PC-9 (cell line): ENCODE measurements at regions of chr6 and their contacts with region 1.

Region 1: GRCh38 chr6:21109391-21110178 is 484.0 kb upstream of the SOX4 start:
- DNase-seq: peak; percentile 20 to 86
- H3K4me3 ChIP-seq: no peak overlapping the region
- H3K27ac ChIP-seq: peak overlapping the region; percentile 32
- H3K4me1 ChIP-seq: peaks cover 48% of the 10 kb centered on the region
- H3K27me3 ChIP-seq: no peaks in the 10 kb centered on the region
- CTCF ChIP-seq: no peak

Region 2: DNA sequence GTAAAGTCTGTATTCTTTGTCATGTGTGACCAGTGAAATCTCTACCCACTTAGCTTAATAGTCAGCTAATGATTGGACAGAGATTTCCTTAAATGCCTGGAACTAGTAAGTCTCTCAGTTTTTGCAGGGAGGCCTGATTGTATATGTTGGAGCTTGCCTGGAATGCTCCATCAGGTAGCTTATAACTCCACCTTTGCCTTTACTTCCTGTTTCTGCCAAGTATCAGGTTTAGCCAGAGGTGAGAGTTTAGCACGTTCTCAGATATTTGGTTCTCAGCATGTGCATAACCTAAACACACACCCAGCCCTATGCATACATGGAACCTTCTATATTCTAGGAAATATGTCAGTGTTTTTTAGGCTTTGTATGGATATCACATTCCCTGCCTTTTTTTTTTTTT is 140.0 kb before region 1 on chr6:
- CTCF ChIA-PET with region 1: no interaction called
- POLR2A ChIA-PET with region 1: interaction called, 13 read pairs
- intact Hi-C with region 1: no loop called
- DNase-seq: no peak
- H3K4me3 ChIP-seq: no peak overlapping the region
- H3K27ac ChIP-seq: no peak overlapping the region
- H3K4me1 ChIP-seq: no peaks in the 10 kb centered on the region
- H3K27me3 ChIP-seq: no peaks in the 10 kb centered on the region
- CTCF ChIP-seq: no peak

Region 3: GRCh38 chr6:20983961-20984360 is 125.6 kb before region 1 on chr6:
- CTCF ChIA-PET with region 1: no interaction called
- POLR2A ChIA-PET with region 1: no interaction called
- intact Hi-C with region 1: no loop called
- DNase-seq: no peak
- H3K4me3 ChIP-seq: no peak overlapping the region
- H3K27ac ChIP-seq: no peak overlapping the region
- H3K4me1 ChIP-seq: no peaks in the 10 kb centered on the region
- H3K27me3 ChIP-seq: no peaks in the 10 kb centered on the region
- CTCF ChIP-seq: no peak

Region 4: DNA sequence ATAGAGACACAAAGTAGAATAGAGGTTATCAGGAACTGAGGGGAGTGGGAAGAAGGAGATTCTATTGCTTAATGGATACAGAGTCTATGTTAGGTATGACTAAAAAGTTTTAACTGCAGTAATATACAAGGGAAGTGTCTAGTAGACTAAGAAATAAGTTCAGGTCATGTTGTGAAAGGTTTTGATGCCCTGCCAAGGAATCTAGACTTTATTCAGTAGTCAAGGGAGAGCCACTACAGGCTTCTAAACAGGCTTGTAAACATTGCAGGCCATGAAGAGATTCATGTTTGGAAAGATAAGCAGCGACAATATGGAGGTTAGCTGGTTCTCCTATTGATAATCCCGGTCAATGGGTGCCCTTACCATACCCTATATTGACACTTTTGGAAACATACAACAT is 131.1 kb after region 1 on chr6:
- CTCF ChIA-PET with region 1: no interaction called
- POLR2A ChIA-PET with region 1: no interaction called
- intact Hi-C with region 1: no loop called
- DNase-seq: no peak
- H3K4me3 ChIP-seq: no peak overlapping the region
- H3K27ac ChIP-seq: no peak overlapping the region
- H3K4me1 ChIP-seq: no peaks in the 10 kb centered on the region
- H3K27me3 ChIP-seq: no peaks in the 10 kb centered on the region
- CTCF ChIP-seq: no peak

Region 5: DNA sequence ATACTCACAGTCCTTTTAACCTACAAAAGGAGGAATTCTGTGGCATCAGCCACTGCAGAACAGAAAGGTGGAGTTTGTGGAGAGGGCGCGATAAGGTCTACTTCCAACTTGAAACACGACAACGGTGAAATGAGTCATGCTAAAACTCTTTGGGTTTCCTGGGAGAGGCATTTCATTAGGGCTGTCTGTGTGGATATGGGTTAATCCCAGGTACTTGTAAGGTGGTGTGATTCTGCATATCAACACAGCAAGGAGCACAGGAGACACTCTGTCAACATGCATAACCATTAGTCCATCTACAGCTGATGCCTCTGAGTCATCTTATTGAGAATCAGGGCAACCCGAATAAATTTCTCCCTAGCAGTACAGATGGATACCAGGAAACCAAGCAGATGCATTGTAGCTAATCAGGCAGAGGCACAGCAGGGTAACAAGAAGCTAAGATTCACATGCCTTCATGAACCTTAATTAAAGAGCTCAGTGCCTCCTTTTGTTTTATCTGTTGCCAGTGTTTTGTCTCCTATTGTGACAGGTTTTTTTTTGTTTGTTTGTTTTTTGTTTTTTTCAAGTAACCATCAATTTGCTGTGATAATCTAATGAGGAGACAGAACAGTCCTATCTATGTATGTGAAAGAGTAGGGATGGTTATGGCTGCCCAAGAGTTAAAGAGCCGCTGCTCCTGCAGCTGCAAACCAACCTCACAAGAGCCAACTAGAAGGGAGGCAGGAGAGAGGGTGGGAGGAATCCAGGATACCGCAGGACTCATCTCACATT is 168.2 kb after region 1 on chr6:
- CTCF ChIA-PET with region 1: interaction called, 3 read pairs
- POLR2A ChIA-PET with region 1: no interaction called
- intact Hi-C with region 1: loop called (anchors 1 kb)
- DNase-seq: peak; percentile 62 to 74
- H3K4me3 ChIP-seq: no peak overlapping the region
- H3K27ac ChIP-seq: no peak overlapping the region
- H3K4me1 ChIP-seq: 0 out of 2 replicates have a peak, but pooled peaks cover 3% of the 10 kb centered on the region
- H3K27me3 ChIP-seq: no peaks in the 10 kb centered on the region
- CTCF ChIP-seq: no peak

Region 6: GRCh38 chr6:21414065-21414464 is 304.5 kb after region 1 on chr6:
- CTCF ChIA-PET with region 1: no interaction called
- POLR2A ChIA-PET with region 1: no interaction called
- intact Hi-C with region 1: no loop called
- DNase-seq: no peak
- H3K4me3 ChIP-seq: no peak overlapping the region
- H3K27ac ChIP-seq: no peak overlapping the region
- H3K4me1 ChIP-seq: no peaks in the 10 kb centered on the region
- H3K27me3 ChIP-seq: no peaks in the 10 kb centered on the region
- CTCF ChIP-seq: no peak